ENCODE measurements at regions of chr19 and their contacts with region 1.

Region 1: GRCh38 chr19:9570255-9570654 is 14.0 kb downstream of the ZNF121 start:
- DNase-seq: no peak
- ATAC-seq: no peak
- H3K4me3 Mint-ChIP-seq: no peak overlapping the region
- H3K27ac Mint-ChIP-seq: no peak overlapping the region
- H3K4me1 Mint-ChIP-seq: peaks cover 17% of the 10 kb centered on the region
- H3K27me3 Mint-ChIP-seq: no peaks in the 10 kb centered on the region
- CTCF ChIP-seq: no peak

Region 2: DNA sequence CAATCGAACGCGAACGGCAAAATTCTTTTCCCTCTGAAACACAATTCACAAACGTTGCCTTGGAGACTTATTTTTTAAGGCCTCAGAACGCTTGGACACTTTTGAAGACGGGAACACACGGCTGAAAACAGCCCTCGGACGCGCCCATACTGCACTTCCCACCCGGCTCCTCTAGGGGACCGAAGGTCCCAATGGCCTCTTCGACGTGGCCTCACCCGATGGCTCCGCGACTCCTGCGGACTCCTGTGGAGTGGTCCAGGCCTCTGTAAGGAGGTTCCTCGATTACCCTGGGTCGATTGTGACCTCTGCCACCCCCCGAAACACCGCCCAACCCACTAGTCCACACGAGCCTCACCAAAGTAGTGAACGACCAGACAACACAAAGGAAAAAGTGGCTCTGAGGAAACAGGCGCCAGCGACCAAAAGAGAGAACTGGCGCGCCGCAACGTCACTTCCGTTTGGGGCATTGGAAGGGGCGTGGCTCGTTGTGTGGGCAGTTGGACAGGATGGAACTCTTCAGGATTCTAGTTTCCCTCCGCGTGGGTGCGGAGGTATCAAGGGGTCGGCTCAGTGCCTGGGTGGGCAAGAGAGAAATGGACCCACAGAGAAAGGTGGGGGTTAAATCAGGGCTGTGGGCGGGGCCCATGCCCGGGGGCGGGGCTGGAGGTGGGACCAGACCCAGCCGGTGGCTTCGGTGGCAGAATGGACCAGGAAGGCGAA is 71.9 kb before region 1 on chr19 and contains the start of gene ZNF560:
- CTCF ChIA-PET with region 1: no interaction called
- POLR2A ChIA-PET with region 1: no interaction called
- intact Hi-C with region 1: no loop called
- DNase-seq: peak; percentile 54
- ATAC-seq: no peak
- H3K4me3 Mint-ChIP-seq: peak within 1 kb of the TSS; percentile 63
- H3K27ac Mint-ChIP-seq: peak within 1 kb of the TSS; percentile 46
- H3K4me1 Mint-ChIP-seq: peaks cover 9% of the 10 kb centered on the region
- H3K27me3 Mint-ChIP-seq: peaks cover 13% of the 10 kb centered on the region
- CTCF ChIP-seq: peak; percentile 37
- total RNA-seq, gene ZNF560: 0.11 to 0.16 TPM

Region 3: DNA sequence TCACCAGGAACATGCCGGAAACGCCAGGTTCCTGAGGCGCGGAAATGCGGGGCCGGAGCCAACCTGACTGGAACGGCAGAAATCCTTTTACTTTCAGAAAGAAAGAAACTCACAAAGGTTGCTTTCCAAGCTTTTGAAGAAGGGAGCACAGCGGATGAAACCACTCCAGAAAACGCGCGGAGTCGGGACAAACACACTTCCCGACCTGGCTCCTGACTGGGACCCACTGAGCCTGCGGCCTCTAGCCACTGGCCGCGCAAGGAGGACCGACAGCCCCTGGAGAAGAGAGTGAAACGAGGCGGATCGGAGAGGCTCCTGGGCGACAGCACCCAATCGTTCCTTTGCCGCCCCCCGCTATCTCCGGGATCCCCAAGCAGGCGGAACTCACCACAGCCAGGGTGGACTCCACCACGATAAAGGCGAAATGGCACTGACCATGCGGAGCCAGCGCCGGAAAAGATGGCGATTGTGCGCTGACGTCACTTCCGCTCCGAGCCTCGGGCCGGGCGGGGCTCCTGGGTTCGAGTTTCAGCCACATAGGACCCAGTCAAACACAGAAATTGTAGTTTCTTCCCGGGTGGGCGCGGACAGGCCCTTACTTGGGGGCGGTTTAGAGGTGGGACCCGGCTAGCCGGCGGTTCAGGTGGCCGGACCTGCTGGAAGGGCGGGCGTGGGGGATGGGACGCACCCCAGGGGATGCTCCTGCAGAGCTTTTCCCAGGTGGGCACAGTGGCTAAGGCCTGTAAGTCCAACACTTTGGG is 14.0 kb after region 1 on chr19 and contains the start of gene ZNF121:
- CTCF ChIA-PET with region 1: interaction called, 5 read pairs
- POLR2A ChIA-PET with region 1: interaction called, 11 read pairs
- intact Hi-C with region 1: no loop called
- DNase-seq: peak; percentile 91
- ATAC-seq: peak; percentile 87
- H3K4me3 Mint-ChIP-seq: peak within 1 kb of the TSS; percentile 92
- H3K27ac Mint-ChIP-seq: peak within 1 kb of the TSS; percentile 97
- H3K4me1 Mint-ChIP-seq: peaks cover 31% of the 10 kb centered on the region
- H3K27me3 Mint-ChIP-seq: peaks cover 5% of the 10 kb centered on the region
- CTCF ChIP-seq: no peak
- total RNA-seq, gene ZNF121: 79.9 to 85.5 TPM

Region 4: DNA sequence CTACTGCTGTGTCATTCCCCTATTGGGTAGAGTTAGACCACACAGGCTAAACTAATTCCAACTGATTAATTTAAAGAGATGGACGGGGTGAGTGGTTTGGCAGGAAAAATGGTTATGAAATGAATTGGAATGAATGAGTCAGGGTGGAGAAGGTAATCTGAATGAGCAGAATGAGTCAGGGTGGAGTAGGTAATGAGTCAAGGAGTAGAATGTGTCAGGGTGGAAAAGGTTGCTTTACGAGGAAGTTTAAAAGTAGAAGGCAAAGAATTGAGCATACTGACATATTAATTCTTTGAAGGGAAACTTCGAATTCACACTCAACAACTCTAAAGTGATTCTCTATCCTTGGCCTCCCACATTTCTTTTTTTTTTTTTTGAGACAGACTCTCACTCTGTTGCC is 26.8 kb after region 1 on chr19:
- CTCF ChIA-PET with region 1: no interaction called
- POLR2A ChIA-PET with region 1: no interaction called
- intact Hi-C with region 1: no loop called
- DNase-seq: no peak
- ATAC-seq: peak; percentile 83
- H3K4me3 Mint-ChIP-seq: no peak overlapping the region
- H3K27ac Mint-ChIP-seq: peak overlapping the region; percentile 49
- H3K4me1 Mint-ChIP-seq: peaks cover 6% of the 10 kb centered on the region
- H3K27me3 Mint-ChIP-seq: peaks cover 3% of the 10 kb centered on the region
- CTCF ChIP-seq: no peak

Measured in activated CD8-positive, alpha-beta T cell treated with anti-CD3 and anti-CD28 coated beads for 36 hours (primary cell).